SK-N-SH (cell line): ENCODE measurements at regions of chr11 and their contacts with region 1.

Region 1: GRCh38 chr11:116641561-116642045 is 131.2 kb downstream of the BUD13 start:
- DNase-seq: peak; percentile 86
- H3K4me3 ChIP-seq: no peak overlapping the region
- H3K27ac ChIP-seq: peak overlapping the region in 1 of 2 experiments; percentile 76; a peak in 1 of 4 replicates
- H3K4me1 ChIP-seq: peaks cover 0 to 19% of the 10 kb centered on the region in 2 experiments; a peak in 1 of 4 replicates
- H3K27me3 ChIP-seq: no peaks in the 10 kb centered on the region; the same call in 1 of the 2 replicates
- CTCF ChIP-seq: peak; percentile 77
- EP300 ChIP-seq: no peak
- RAD21 ChIP-seq: peak; percentile 93

Region 2: DNA sequence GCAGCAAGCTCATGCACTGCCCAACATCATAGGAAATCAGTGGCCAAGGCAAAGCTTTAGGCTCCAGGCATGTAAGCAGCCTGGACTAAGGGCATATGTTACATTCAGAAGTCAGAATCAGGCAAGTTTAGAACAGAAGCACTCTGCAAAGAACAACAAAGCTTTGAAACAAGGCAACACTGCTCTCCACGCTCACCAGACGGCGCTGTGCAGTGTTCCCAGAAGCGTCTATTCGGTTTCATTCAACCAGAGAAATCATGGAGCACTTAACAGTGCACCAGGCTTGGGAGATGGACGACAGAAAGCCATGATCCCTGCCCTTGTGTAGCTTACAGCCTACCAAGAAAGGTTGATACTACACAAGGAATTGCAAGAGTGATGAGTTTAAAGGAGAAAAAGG is 424.6 kb before region 1 on chr11:
- CTCF ChIA-PET with region 1: interaction called, 18 read pairs
- POLR2A ChIA-PET with region 1: no interaction called
- DNase-seq: no peak
- H3K4me3 ChIP-seq: no peak overlapping the region
- H3K27ac ChIP-seq: peak overlapping the region in 1 of 2 experiments; percentile 64; a peak in 1 of 4 replicates
- H3K4me1 ChIP-seq: peaks cover 0 to 25% of the 10 kb centered on the region in 2 experiments; a peak in 1 of 4 replicates
- H3K27me3 ChIP-seq: no peaks in the 10 kb centered on the region
- CTCF ChIP-seq: peak; percentile 68
- EP300 ChIP-seq: no peak
- RAD21 ChIP-seq: peak; percentile 62

Region 3: DNA sequence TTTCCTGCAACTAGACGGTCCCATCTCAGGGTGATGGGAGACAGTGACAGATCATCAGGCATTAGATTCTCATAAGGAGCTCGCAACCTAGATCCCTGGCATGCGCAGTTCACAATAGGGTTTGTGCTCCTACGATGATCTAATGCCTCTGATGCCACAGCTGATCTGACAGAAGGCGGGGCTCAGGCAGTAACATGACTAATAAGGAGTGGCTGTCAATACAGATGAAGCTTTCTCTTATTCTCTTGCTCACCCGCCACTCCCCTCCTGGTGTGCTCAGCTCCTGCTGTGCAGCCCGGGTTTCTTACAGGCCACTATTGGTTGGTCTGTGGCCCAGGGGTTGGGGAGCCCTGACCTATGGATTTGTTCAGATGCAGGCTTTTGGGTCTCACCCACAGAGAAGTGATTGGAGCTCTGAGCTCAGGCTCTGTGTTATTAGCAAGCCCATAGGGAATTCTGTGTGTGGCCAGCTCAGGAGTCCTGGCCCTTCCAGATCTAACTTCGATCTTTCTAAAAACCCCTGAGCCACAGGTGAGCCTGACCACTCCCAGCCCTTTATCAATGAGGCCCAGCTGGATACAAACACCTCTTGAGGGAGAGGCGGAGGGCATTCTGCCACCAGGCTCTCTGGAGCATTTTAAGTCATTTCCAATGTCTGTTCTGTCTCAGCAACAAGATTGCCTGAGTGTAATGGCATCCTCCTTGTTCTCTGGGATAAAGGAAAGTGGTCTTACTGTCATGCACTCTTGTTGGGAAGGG is 220.7 kb before region 1 on chr11:
- CTCF ChIA-PET with region 1: interaction called, 22 read pairs
- POLR2A ChIA-PET with region 1: interaction called, 3 read pairs
- DNase-seq: no peak
- H3K4me3 ChIP-seq: no peak overlapping the region
- H3K27ac ChIP-seq: peak overlapping the region in 1 of 2 experiments; percentile 100; a peak in 2 of 4 replicates
- H3K4me1 ChIP-seq: peaks cover 0 to 71% of the 10 kb centered on the region in 2 experiments; a peak in 2 of 4 replicates
- H3K27me3 ChIP-seq: no peaks in the 10 kb centered on the region
- CTCF ChIP-seq: no peak
- EP300 ChIP-seq: no peak
- RAD21 ChIP-seq: no peak

Region 4: DNA sequence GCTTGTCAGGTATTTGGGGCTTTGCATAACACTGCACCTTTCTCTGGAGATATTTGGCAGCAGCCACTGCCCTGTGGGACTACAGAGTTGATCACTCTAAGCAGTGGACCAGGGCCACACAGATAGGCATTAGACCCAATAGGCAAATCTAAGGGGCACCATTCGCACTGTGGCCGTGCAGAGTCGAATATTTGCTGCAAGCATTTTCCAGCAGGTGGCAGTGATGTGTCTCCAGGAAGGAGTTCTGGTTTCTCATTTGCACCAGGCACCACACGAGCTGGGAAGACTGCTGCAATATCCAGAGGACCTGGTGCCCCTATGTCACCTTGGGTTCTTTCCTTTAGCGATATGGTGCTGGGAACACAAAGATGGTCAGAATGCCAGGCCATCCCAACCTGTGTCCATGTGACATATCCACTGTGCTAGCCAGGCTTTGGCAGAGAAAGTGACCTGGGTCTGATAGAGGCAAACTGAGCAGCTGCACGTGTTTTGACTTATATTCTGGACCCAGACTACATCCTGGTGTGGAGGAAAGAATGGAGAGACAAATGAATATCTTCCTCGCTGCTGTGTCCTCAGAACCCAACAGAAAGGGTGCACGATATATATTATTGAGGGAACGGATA is 187.5 kb before region 1 on chr11:
- CTCF ChIA-PET with region 1: interaction called, 41 read pairs
- POLR2A ChIA-PET with region 1: no interaction called
- DNase-seq: peak; percentile 37
- H3K4me3 ChIP-seq: no peak overlapping the region
- H3K27ac ChIP-seq: peak overlapping the region in 1 of 2 experiments; percentile 99; a peak in 2 of 4 replicates
- H3K4me1 ChIP-seq: peaks cover 0 to 46% of the 10 kb centered on the region in 2 experiments; a peak in 1 of 4 replicates
- H3K27me3 ChIP-seq: no peaks in the 10 kb centered on the region
- CTCF ChIP-seq: peak; percentile 62
- EP300 ChIP-seq: no peak
- RAD21 ChIP-seq: peak; percentile 80

Region 5: DNA sequence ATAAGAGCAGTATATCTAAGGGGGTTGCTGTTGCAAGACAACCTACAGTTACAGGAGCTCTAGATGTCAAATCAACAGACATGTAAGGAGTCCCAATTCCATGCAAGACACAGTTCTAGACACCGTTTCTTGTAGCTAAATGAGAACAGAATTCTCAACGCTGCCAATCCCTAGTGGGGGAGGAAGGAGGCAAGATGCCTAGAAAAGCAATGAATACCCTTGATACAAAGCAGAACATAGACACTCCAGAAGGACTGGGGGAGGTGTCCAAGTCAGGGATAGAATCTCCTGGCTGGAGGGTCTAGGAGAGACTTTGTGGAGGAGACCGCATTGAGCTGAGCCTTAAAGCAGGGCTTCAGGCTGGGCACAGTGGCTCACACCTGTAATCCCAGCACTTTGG is 149.0 kb before region 1 on chr11:
- CTCF ChIA-PET with region 1: no interaction called
- POLR2A ChIA-PET with region 1: no interaction called
- DNase-seq: no peak
- H3K4me3 ChIP-seq: no peak overlapping the region
- H3K27ac ChIP-seq: no peak overlapping the region
- H3K4me1 ChIP-seq: peaks cover 0 to 20% of the 10 kb centered on the region in 2 experiments; a peak in 1 of 4 replicates
- H3K27me3 ChIP-seq: no peaks in the 10 kb centered on the region
- CTCF ChIP-seq: no peak
- EP300 ChIP-seq: no peak
- RAD21 ChIP-seq: no peak

Region 6: GRCh38 chr11:116505298-116506262 is 136.0 kb before region 1 on chr11:
- CTCF ChIA-PET with region 1: interaction called, 47 read pairs
- POLR2A ChIA-PET with region 1: interaction called, 27 read pairs
- DNase-seq: peak; percentile 79
- H3K4me3 ChIP-seq: no peak overlapping the region
- H3K27ac ChIP-seq: peak overlapping the region in 1 of 2 experiments; percentile 97; a peak in 2 of 4 replicates
- H3K4me1 ChIP-seq: peaks cover 0 to 93% of the 10 kb centered on the region in 2 experiments; a peak in 2 of 4 replicates
- H3K27me3 ChIP-seq: peaks cover 23% of the 10 kb centered on the region; the same call in 1 of the 2 replicates
- CTCF ChIP-seq: no peak
- EP300 ChIP-seq: peak in 1 of 2 experiments; percentile 83; a peak in 2 of 4 replicates
- RAD21 ChIP-seq: peak; percentile 6; the same call in 1 of the 2 replicates

Region 7: DNA sequence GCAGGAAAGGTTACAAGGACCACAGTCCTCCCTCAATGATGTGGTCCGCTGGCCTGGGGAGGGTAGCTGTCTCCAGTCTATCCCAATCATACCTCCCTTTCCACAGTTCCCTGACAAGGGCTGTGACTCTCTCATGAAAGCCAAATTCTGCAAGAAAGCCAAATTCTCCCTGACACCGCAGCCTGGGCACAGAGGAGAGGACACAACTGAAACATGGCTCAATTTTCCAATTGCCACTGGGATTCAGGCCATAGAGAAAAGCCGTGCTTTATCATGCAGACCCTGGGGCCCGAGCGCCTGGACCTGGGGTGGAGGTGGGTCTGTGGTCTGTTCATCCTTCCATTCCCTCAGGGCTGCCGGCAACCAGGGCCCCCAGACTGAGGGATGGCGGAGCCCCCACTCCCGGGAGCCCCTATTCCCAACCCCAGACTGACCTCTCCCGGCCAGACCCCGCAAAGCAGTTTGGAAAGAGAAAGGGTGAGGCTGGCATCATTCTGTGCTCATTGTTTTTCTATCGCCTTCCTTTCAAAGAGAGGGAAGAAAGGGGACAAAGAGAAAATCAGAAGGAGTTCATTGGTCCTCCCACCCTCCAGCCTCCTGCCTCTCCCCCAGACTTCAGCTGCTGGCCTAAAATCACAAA is 108.3 kb before region 1 on chr11:
- CTCF ChIA-PET with region 1: interaction called, 23 read pairs
- POLR2A ChIA-PET with region 1: no interaction called
- DNase-seq: peak; percentile 87
- H3K4me3 ChIP-seq: no peak overlapping the region
- H3K27ac ChIP-seq: peak overlapping the region in 1 of 2 experiments; percentile 83; a peak in 2 of 4 replicates
- H3K4me1 ChIP-seq: peaks cover 0 to 10% of the 10 kb centered on the region in 2 experiments; a peak in 1 of 4 replicates
- H3K27me3 ChIP-seq: peaks cover 13% of the 10 kb centered on the region; the same call in 1 of the 2 replicates
- CTCF ChIP-seq: 0 out of 2 replicates have a peak, but pooled peaks have one; percentile 27
- EP300 ChIP-seq: no peak
- RAD21 ChIP-seq: peak; percentile 81

Region 8: DNA sequence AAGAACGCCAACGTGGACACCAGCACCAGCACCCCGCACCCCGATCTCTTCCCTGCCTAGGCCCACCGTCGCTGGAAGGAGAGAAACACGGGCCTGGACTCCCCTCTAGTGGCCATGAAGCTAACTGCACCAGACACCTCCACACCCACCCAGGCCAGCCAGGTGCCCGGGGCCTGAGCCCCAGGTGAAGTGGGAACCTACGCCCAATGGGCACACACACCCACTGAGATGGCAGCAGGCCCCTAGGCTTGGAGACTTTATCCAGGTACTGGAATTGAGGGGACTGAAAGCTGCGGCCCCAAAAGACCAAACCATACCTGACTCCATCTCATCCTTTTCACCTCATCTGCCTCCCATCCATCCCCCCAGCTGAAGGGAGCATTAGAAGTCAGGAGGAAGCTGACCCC is 50.2 kb after region 1 on chr11:
- CTCF ChIA-PET with region 1: interaction called, 27 read pairs
- POLR2A ChIA-PET with region 1: no interaction called
- DNase-seq: peak; percentile 91
- H3K4me3 ChIP-seq: peak overlapping the region in 1 of 2 experiments; percentile 24; a peak in 1 of 4 replicates
- H3K27ac ChIP-seq: no peak overlapping the region
- H3K4me1 ChIP-seq: peaks cover 0 to 18% of the 10 kb centered on the region in 2 experiments; a peak in 1 of 4 replicates
- H3K27me3 ChIP-seq: no peaks in the 10 kb centered on the region
- CTCF ChIP-seq: peak; percentile 91
- EP300 ChIP-seq: no peak
- RAD21 ChIP-seq: peak; percentile 94